ENCODE measurements at regions of chr1 and their contacts with region 1.

Region 1: DNA sequence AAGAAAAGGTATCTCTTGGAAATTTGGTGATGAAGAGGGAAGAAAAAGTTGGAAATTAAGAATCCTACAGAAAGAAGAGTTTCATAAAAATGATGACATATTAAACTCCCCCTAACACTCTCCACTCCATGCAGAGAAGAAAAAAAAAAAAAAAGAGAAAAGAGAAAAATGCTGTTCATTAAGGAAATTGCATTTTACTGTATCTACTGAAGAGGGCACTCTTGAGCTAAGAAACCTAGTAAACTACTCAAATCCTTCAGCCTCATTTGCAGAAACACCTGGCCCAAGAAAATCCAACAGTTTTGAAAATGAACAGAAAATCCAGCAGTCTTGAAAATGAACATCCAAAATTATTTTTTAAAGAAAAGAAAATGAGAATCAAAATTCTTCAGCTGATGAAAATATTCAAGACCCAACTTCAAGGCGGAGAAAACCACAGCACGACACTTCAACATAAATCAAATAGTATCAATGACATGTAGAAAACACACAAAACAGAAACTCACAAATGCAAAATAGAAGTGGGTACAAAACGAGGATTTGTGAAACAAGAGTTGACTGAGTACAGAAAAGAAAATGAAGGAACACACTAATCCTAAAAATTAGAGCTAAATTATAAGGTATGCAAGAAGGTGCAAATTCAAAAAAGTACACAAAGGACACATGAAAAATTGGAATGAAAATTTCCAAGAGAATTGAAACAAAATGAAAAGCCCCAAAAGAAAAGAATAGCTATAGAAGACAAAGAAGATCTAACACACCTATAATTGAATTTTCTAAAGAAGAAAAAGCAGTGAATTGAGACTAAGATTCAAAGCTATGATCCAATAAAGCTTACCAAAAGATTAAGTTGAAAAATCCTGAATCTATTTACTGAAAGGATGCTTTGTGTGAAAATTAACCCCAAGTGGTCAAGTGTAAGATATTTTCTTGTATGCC is 73.2 kb upstream of the DNAJC6 start:
- DNase-seq: no peak
- H3K4me3 ChIP-seq: no peak overlapping the region
- H3K27ac ChIP-seq: no peak overlapping the region
- H3K4me1 ChIP-seq: no peaks in the 10 kb centered on the region
- H3K27me3 ChIP-seq: no peaks in the 10 kb centered on the region
- CTCF ChIP-seq: peak; percentile 87

Region 2: DNA sequence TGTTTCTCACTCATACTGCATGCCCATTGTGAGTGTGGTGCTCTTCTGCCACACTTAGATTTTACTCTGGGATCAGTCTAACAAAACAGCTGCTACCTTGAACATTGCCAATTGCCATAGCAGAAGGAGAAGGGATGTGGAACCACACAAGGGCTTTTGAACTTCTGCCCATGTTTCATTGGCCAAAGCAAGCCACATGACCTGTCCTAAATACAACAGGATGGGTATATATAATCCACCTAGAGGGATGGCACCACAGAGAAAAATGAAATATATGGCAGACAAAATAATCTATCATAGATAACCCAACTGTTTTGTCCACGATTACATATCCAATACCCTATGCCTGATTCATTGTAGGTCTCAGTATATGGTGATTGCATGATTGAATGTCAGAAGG is 582.8 kb after region 1 on chr1:
- CTCF ChIA-PET with region 1: no interaction called
- POLR2A ChIA-PET with region 1: interaction called, 10 read pairs
- intact Hi-C with region 1: no loop called
- DNase-seq: no peak
- H3K4me3 ChIP-seq: no peak overlapping the region
- H3K27ac ChIP-seq: no peak overlapping the region
- H3K4me1 ChIP-seq: no peaks in the 10 kb centered on the region
- H3K27me3 ChIP-seq: no peaks in the 10 kb centered on the region
- CTCF ChIP-seq: no peak

Region 3: DNA sequence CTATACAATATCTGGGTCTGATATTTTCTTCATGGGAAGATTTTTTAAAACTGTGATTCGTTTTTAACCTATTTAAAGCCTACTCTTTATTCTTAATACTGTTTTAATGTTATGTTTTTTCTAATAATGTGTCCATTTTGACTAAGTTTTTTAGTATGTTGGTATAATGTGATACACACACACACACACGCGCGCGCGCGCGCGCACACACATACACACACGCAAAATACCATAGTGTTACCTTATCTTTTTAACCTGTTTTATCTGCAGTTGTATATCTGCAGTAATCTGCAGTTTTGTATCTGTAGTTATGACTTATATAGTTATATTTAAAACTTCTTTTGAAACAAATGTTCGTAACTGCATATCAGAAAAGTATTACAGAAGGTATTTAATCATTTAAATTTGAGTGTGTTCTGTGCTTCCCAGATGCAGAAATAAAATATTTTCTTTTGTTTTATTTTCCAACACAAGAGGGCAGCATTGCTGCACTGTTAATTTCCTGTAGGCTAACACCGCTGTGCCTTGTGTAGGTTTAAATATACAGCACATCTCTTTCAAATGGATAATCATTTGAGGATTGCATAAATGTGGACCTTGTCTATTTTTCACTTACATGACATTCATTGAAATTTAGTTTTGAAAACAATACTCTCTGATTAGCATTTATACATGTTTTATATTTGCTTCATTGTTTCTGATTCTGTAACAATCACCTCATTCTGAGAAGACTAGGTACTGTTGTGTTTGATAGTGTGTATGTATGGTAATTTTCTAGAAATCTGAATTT is 722.6 kb after region 1 on chr1:
- CTCF ChIA-PET with region 1: no interaction called
- POLR2A ChIA-PET with region 1: no interaction called
- intact Hi-C with region 1: loop called (anchors 5 kb)
- DNase-seq: no peak
- H3K4me3 ChIP-seq: no peak overlapping the region
- H3K27ac ChIP-seq: no peak overlapping the region
- H3K4me1 ChIP-seq: no peaks in the 10 kb centered on the region
- H3K27me3 ChIP-seq: no peaks in the 10 kb centered on the region
- CTCF ChIP-seq: peak; percentile 85

Measured in PC-9 (cell line).